Cardiac septum (tissue), 1 donor: ENCODE measurements at regions of chr10 and their contacts with region 1.

Region 1: DNA sequence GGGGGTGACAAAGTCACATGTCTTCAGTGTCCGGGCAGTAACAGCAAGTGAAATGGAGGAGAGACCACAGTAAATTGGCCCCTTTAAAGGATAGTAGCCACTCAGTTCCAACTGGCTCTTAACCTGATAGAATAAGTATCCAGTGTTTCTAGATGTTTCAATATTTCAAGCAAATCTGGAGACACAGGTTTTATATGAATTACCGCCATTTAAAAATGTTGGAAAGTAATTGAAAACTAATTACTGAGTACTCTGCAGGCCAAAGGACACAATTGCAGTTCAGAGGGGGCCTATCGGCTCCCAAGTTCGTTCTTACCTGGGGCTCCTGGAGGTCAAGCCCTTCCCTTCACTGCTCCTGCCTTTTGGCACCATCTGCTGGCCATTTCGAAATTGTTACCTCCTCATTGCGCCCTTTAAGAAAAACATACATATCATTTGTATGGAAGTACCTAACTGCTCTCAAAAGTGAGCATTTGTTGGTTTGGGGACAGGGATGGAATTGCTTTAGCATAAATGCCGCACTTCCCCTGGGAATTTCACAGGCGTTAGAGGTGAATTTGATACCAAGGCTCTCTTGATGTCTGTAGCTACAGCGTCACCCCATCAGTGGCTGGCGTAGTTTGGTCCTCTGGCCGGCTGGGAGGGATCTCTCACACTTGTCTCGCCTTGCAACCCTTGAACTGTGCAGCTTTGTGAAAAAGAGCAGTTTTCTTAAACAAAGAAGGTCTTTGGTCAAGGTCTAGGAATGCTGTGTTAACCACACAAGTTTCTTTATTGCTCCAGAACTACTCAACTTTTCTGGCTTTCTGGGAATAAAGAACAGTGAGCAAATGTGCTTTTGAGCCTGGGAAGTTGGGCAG is 220.0 kb downstream of the ARHGAP21 start:
- DNase-seq: no peak

Region 2: GRCh38 chr10:24374134-24374915 is 129.4 kb before region 1 on chr10:
- intact Hi-C with region 1: loop called (anchors 10 kb)
- DNase-seq: no peak

Region 3: DNA sequence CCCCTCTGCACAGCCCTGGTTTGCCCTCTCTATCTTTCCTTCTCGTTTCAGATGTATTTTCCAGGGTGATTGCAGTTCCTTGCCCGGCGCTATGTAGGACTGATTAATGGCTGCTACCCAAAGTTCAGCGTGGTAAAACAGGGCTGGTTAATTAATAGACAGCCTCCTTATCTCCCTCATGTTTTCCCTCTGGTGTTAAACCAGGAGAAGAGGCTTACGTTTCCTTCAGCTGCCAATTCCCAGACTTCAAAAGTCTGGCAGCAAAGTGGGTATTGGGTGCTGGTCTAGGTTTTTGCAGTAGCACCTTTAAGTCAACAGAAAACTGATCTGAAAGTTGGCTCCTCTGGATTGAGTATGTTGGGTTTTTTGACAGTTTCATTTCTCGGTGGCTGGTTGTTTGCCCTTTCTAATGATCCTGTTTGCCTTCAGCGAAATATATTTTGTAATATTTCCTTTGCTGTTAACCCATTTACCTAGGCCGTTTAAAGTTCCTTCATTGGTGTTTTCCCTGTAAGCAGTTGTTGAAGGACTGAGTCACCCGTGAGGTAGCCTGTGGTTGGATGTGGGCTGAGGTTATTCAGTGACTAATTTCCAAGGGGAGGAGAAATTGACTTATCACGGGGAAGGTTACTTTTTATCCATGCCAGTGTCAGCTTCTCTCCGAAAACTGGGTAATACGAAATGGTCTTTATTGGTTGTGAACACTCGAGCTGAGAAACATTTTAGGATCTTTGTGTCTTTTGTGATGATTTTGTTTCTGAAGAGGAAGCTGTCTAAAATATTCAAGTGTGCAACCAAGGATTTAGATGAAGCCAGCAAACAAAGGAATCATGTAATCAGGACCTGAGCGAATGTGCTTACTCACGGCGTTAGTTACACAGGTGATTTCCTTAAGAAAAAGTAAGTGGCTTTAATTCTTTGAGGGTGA is 37.5 kb before region 1 on chr10:
- intact Hi-C with region 1: loop called (anchors 5 kb)
- DNase-seq: no peak